ENCODE measurements at regions of chr9 and their contacts with region 1.

Region 1: GRCh38 chr9:120755827-120756434 is 37.3 kb downstream of the FBXW2 start:
- DNase-seq: peak in 1 of 3 donors; percentile 85
- ATAC-seq: peak; percentile 76
- H3K4me3 ChIP-seq: no peak overlapping the region
- H3K4me1 ChIP-seq: no peaks in the 10 kb centered on the region
- CTCF ChIP-seq: no peak

Region 2: DNA sequence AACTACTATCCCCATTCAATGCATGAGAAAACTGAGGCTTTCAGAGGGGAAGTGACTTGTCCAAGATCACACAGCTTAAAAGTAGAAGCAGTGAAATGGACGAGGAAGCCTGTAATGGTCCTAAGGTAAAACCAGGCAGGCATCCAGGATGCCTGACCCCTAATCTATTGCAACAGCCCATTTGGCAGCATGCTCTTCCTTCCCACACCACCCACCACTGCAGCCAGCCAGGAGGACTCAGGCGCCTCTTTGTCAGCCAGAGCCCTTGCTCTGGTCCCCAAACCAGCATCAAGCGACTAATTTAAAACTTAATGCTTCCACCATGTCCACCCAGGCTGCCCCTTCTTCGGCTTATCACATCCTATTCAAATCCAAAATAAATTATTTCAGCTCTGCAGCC is 717.6 kb before region 1 on chr9:
- intact Hi-C with region 1: no loop called
- DNase-seq: no peak
- ATAC-seq: no peak
- H3K4me3 ChIP-seq: no peak overlapping the region
- H3K4me1 ChIP-seq: no peaks in the 10 kb centered on the region
- CTCF ChIP-seq: no peak

Region 3: GRCh38 chr9:120842690-120843499 is 87.0 kb after region 1 on chr9 and contains the start of gene PSMD5:
- intact Hi-C with region 1: no loop called
- DNase-seq: peak; percentile 97 to 99 (median 98)
- ATAC-seq: peak; percentile 99
- H3K4me3 ChIP-seq: peak within 1 kb of the TSS; percentile 54
- H3K4me1 ChIP-seq: peaks cover 5% of the 10 kb centered on the region
- CTCF ChIP-seq: no peak
- total RNA-seq, gene PSMD5: 30.1 to 46.9 (median 32.3) TPM

Region 4: DNA sequence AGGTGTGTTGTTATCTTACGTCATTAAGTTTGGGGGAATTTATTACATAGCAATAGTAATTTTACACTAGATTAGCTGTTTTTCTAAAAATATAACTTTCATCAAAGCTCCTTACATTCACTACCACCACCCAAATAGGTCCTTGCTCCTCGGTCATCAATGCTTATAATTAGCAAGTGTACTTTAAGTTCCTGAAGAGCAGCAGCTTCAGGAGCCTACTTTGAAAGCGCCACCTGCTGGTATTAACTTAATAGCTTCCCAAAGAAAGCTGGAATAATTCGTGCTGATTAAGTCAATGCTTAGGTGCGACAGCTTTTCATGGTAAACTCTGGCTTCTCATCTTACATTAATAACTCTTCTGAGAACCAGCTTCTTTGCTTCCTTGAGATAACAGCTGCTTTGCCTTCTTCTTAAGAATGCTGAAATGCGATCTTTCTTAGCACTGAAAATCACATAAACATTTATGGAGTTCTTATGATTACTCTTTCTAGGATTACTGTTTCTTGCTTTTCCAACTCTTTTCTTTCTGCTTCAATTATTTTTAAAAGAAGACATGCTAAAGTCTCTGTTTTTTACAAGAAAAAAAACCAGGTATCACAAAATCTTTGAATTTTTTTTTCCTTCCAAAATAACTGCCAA is 304.2 kb after region 1 on chr9:
- intact Hi-C with region 1: loop called in 1 of 2 experiments (anchors 10 kb)
- DNase-seq: peak in 1 of 3 donors; percentile 58
- ATAC-seq: peak; percentile 42
- H3K4me3 ChIP-seq: no peak overlapping the region
- H3K4me1 ChIP-seq: no peaks in the 10 kb centered on the region
- CTCF ChIP-seq: peak; percentile 38

Measured in mucosa of descending colon (tissue), 3 donors.